Dorsolateral prefrontal cortex (tissue), 120 donors: ENCODE measurements at regions of chr2 and their contacts with region 1.

Region 1: GRCh38 chr2:126776692-126777619 is 121.0 kb downstream of the GYPC start:
- DNase-seq: peak; percentile 64 to 91 (median 82)
- H3K4me3 ChIP-seq: peak overlapping the region; percentile 49 to 84 (median 68)
- H3K27ac ChIP-seq: peak overlapping the region in 40 of 59 donors; percentile 3 to 81 (median 44)
- H3K27me3 ChIP-seq: peaks cover 0 to 4% (median 0%) of the 10 kb centered on the region in 45 donors
- CTCF ChIP-seq: peak; percentile 50 to 96 (median 90)

Region 2: DNA sequence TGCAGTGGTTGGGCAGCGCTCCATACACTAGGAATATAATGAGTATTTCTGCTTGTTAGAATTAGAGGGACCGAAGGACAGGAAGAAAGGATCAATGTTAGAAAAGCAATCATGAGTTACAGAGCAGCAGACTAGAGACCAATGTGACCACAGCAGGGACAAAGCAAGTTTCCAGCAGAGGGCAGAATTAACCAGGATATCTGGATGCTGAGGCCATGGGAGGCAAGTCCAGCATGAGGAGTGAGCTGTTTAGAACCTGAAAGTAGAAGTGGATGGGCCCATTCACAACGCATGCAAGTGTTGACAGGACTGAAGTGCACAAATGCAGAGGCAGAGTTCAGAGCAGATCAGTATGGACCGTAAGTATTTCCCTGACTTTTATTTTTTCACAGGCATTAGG is 1031.4 kb before region 1 on chr2:
- intact Hi-C with region 1: loop called (anchors 2 to 5 kb)
- DNase-seq: peak in 7 of 10 donors; percentile 6 to 66 (median 45)
- H3K4me3 ChIP-seq: no peak overlapping the region
- H3K27ac ChIP-seq: no peak overlapping the region
- H3K27me3 ChIP-seq: no peaks in the 10 kb centered on the region
- CTCF ChIP-seq: peak in 55 of 56 donors; percentile 27 to 85 (median 64)